ENCODE measurements at regions of chr14 and their contacts with region 1.

Region 1: GRCh38 chr14:54737132-54737711 is 165.4 kb downstream of the GCH1 start:
- DNase-seq: no peak
- ATAC-seq: no peak
- H3K4me3 Mint-ChIP-seq: no peak overlapping the region
- H3K27ac Mint-ChIP-seq: no peak overlapping the region
- H3K4me1 Mint-ChIP-seq: peaks cover 18% of the 10 kb centered on the region
- H3K27me3 Mint-ChIP-seq: no peaks in the 10 kb centered on the region
- CTCF ChIP-seq: no peak

Region 2: GRCh38 chr14:54716862-54717261 is 20.4 kb before region 1 on chr14:
- CTCF ChIA-PET with region 1: no interaction called
- POLR2A ChIA-PET with region 1: no interaction called
- DNase-seq: no peak
- ATAC-seq: no peak
- H3K4me3 Mint-ChIP-seq: no peak overlapping the region
- H3K27ac Mint-ChIP-seq: no peak overlapping the region
- H3K4me1 Mint-ChIP-seq: 0 out of 2 replicates have a peak, but pooled peaks cover 3% of the 10 kb centered on the region
- H3K27me3 Mint-ChIP-seq: no peaks in the 10 kb centered on the region
- CTCF ChIP-seq: no peak

Region 3: GRCh38 chr14:55488204-55488603 is 751.0 kb after region 1 on chr14:
- CTCF ChIA-PET with region 1: no interaction called
- POLR2A ChIA-PET with region 1: interaction called, 14 read pairs
- DNase-seq: no peak
- ATAC-seq: no peak
- H3K4me3 Mint-ChIP-seq: no peak overlapping the region
- H3K27ac Mint-ChIP-seq: no peak overlapping the region
- H3K4me1 Mint-ChIP-seq: peaks cover 2% of the 10 kb centered on the region; the same call in 1 of the 2 replicates
- H3K27me3 Mint-ChIP-seq: no peaks in the 10 kb centered on the region; the same call in 1 of the 2 replicates
- CTCF ChIP-seq: no peak